HEK293 (cell line): ENCODE measurements at regions of chr7 and their contacts with region 1.

Region 1: DNA sequence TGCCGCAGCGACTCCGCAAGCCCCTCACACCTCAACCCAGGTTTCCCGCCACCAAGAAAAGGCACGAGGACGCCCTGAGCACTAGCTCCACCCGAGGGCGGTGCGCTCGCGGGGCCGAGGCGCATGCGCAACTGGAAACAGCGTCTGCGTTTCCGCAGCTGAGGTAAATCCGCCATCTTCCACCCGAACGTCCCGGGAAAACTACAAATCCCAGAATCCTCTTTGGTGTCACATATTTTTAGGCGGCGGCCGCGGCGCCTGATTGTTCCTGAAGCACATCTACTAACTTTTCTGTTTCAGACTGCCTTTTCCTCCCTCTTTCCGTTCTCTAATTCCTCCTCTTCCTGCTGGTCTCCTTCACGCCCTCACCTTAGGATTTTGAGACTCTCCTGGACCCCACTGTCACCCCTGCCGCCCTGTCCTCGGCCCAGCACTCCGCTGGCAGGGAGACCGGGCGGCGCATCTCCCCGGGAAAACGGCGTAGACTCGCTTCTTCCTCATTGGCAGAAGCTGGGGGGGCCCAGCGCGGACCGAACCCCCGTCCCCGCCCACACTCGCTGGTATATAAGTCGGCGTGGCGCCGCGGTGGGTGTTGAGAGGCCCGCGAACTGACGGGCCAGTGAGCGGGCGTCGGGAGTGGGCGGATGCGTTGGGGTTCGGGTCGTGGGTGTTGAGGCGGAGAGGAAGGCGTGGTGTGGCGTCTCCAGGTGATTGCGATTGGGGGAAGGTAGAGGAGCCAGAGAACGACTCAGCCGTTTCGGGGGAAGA is at the start of gene ZCWPW1:
- H3K4me3 ChIP-seq: peak within 1 kb of the TSS; percentile 83
- H3K27ac ChIP-seq: peak within 1 kb of the TSS; percentile 97
- H3K4me1 ChIP-seq: peaks cover 4% of the 10 kb centered on the region
- CTCF ChIP-seq: peak; percentile 28; the same call in 1 of the 2 replicates

Region 2: GRCh38 chr7:100444311-100445278 is 16.2 kb after region 1 on chr7:
- CTCF ChIA-PET with region 1: no interaction called
- POLR2A ChIA-PET with region 1: interaction called, 28 read pairs
- H3K4me3 ChIP-seq: no peak overlapping the region
- H3K27ac ChIP-seq: no peak overlapping the region
- H3K4me1 ChIP-seq: no peaks in the 10 kb centered on the region
- CTCF ChIP-seq: no peak

Region 3: DNA sequence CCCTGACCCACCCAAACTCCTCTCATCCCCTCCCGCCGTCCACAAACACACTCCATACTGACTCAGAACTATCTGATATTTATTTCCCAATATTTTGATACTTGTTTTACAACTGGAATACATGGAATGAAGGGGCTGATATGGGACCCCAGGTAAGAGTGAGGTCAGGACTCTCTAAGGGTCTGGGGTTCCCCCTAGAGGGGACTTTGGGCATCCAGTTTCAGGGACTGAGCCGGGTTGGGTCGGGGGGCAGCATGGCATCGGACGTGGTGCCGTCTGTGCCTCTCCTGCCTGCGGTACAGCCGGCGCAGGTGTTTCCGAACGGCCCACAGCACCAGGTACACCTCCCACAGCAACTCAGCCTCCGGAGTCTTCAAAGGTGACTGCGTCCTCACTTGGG is 28.2 kb after region 1 on chr7:
- CTCF ChIA-PET with region 1: no interaction called
- POLR2A ChIA-PET with region 1: interaction called, 21 read pairs
- H3K4me3 ChIP-seq: no peak overlapping the region
- H3K27ac ChIP-seq: no peak overlapping the region
- H3K4me1 ChIP-seq: no peaks in the 10 kb centered on the region
- CTCF ChIP-seq: no peak